HEK293 (cell line): ENCODE measurements at regions of chr6 and their contacts with region 1.

Region 1: DNA sequence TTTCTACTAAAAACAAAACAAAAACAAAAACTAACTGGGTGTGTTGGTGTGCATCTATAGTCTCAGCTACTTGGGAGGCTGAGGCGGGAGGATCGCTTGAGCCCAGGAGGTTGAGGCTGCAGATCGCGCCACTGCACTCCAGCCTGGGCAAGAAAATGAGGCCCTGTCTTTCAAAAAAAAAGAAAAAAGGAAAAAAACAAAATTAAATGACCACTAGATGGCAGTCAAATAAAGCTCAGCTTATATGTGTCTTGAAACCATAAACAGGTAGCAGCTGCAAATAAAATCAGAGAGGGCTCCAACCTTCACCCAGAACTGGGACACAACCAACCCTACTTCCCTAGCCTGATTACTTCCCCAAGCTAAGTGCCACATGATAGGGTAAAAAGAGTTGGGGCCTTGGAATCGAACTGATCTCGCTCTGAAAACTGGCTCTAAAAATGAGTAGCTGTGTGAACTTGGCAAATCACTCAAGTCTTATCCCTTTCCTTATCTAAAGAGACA is 67.1 kb upstream of the ADGRF4 start:
- H3K4me3 ChIP-seq: no peak overlapping the region
- H3K27ac ChIP-seq: no peak overlapping the region
- H3K4me1 ChIP-seq: peaks cover 23% of the 10 kb centered on the region
- CTCF ChIP-seq: peak; percentile 75; the same call in 1 of the 2 replicates

Region 2: DNA sequence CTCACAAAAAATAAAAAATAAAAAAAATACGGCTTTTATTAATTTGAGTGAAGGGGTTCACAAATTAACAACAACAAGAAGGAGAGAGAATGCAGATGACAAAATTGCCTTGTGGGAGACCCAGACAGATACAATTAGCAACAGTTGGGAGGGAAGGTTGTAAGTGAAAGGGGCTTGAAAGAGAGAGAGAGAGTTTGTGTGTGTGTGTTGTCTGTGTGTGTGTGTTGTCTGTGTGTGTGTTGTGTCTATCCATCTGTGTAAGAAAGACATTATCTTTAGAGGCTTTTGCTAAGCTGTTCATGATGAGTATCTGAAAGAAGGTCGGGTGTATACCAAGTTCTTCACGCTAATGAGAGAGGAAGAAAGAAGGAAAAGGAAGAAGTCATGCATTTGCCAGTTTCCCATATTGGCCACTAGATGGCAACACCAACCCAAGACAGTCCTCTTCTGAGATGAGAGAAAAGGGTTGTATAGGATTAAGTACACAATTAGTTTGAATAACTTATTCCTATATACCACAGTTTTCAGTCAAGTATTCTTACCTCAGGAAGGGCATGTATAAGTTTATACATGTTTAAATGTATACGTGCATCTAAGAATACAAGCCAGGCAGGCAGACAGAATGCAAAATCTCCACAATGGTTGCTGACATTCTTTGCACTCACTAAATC is 217.4 kb before region 1 on chr6:
- CTCF ChIA-PET with region 1: interaction called, 33 read pairs
- POLR2A ChIA-PET with region 1: no interaction called
- H3K4me3 ChIP-seq: peak overlapping the region; percentile 35
- H3K27ac ChIP-seq: peak overlapping the region; percentile 83
- H3K4me1 ChIP-seq: peaks cover 6% of the 10 kb centered on the region; the same call in 1 of the 2 replicates
- CTCF ChIP-seq: peak; percentile 72

Region 3: DNA sequence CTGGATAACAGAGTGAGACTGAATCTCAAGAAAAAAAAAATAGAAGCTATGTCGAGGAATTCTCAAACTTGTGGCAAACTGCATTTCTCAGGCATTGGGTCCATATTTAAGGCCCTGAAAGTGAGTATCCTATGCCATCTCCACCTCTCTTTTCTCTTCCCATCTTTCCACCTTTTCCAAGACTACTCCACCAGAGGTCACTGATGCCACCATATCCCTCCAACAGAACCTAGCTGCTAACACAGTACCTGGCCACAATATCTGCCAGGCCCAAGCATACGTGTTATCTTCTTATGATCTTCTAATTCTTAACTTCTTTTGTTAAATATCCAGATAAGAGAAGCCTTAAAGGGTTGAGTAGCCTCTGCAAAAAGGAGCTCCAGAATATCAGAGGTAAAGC is 58.9 kb after region 1 on chr6:
- CTCF ChIA-PET with region 1: interaction called, 14 read pairs
- POLR2A ChIA-PET with region 1: no interaction called
- H3K4me3 ChIP-seq: no peak overlapping the region
- H3K27ac ChIP-seq: no peak overlapping the region
- H3K4me1 ChIP-seq: no peaks in the 10 kb centered on the region
- CTCF ChIP-seq: peak; percentile 70

Region 4: GRCh38 chr6:47733879-47734558 is 102.7 kb after region 1 on chr6:
- CTCF ChIA-PET with region 1: interaction called, 122 read pairs
- POLR2A ChIA-PET with region 1: interaction called, 6 read pairs
- H3K4me3 ChIP-seq: no peak overlapping the region
- H3K27ac ChIP-seq: no peak overlapping the region
- H3K4me1 ChIP-seq: no peaks in the 10 kb centered on the region
- CTCF ChIP-seq: no peak

Region 5: GRCh38 chr6:47749757-47750156 is 118.4 kb after region 1 on chr6:
- CTCF ChIA-PET with region 1: interaction called, 12 read pairs
- POLR2A ChIA-PET with region 1: no interaction called
- H3K4me3 ChIP-seq: no peak overlapping the region
- H3K27ac ChIP-seq: no peak overlapping the region
- H3K4me1 ChIP-seq: no peaks in the 10 kb centered on the region
- CTCF ChIP-seq: no peak

Region 6: DNA sequence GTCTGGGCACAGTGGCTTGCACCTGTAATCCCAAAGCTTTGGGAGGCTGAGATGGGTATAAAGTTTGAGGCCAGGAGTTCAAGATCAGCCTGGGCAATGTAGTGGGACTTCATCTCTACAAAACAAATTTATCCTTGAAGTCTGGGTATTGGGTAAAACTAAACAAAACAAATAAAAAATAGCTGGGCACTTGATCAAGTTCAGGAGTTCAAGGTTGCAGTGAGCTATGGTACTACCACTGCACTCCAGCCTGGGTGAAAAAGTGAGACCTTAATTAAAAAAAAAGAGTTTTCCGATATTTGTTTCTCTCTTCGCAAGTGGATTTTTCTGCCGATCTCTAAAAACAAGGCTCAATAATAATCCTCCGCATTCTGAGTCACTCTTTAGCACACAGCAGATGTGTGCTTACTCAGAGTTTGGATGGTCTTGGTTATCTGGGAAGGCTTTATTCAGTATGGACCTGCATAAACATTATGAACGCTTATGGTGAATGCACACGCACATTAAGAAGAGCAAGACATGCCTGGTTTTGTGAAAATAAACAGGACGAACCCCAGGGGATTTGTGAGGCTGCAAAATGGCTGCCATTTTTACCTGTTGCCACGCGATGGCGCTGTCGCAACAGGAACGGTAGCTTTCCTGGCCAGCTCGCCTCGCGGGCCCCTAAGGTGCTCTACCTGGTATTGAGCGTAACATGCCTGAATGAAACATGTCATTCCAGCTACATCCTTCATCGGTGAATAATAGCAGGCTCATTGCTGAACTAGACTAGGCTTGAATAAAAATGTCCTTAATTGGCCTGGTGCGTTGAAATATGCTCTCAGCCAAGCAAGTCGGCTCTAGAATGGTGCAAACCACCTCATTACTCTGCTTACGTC is 156.5 kb after region 1 on chr6:
- CTCF ChIA-PET with region 1: interaction called, 117 read pairs
- POLR2A ChIA-PET with region 1: no interaction called
- H3K4me3 ChIP-seq: no peak overlapping the region
- H3K27ac ChIP-seq: no peak overlapping the region
- H3K4me1 ChIP-seq: no peaks in the 10 kb centered on the region
- CTCF ChIP-seq: peak; percentile 92